SK-N-SH (cell line): ENCODE measurements at regions of chrX and their contacts with region 1.

Region 1: DNA sequence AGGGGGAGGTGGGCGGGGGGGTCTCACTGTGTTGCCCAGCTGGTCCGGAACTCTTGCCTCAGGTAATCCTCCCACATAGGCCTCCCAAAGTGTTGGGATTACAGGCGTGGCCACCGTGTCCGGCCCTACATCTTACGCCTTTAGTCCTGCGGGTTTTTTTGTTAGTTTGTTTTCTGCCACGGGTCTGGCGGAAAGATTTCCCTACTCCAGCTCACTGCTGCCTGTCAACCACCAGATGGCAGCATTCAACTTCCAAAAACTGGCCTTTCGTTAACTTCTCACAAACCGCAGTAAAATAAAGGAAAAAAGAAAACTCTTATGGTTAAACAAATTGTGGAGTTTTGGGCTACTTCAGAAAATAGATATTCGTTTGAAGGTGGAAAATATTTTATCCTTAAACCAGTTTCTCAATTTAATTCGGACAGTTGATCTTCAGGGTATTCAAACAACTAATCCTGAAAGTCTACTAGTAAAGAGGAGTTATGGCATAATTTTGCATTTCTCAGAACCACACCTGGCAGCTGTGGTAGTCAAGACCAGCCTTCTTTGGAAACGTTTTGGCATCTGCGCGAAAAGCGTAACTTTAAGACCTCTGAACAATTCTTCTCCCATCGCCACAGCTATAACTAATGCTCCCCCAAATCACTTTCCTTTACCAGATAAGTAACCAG is 41.1 kb downstream of the LUZP4 start:
- DNase-seq: peak; percentile 67
- H3K4me3 ChIP-seq: peak overlapping the region in 1 of 2 experiments; percentile 15; a peak in 1 of 4 replicates
- H3K27ac ChIP-seq: no peak overlapping the region
- H3K4me1 ChIP-seq: no peaks in the 10 kb centered on the region; a peak in 1 of 4 replicates
- H3K27me3 ChIP-seq: peaks cover 4% of the 10 kb centered on the region; the same call in 1 of the 2 replicates
- CTCF ChIP-seq: peak; percentile 91
- EP300 ChIP-seq: no peak
- RAD21 ChIP-seq: peak; percentile 92

Region 2: DNA sequence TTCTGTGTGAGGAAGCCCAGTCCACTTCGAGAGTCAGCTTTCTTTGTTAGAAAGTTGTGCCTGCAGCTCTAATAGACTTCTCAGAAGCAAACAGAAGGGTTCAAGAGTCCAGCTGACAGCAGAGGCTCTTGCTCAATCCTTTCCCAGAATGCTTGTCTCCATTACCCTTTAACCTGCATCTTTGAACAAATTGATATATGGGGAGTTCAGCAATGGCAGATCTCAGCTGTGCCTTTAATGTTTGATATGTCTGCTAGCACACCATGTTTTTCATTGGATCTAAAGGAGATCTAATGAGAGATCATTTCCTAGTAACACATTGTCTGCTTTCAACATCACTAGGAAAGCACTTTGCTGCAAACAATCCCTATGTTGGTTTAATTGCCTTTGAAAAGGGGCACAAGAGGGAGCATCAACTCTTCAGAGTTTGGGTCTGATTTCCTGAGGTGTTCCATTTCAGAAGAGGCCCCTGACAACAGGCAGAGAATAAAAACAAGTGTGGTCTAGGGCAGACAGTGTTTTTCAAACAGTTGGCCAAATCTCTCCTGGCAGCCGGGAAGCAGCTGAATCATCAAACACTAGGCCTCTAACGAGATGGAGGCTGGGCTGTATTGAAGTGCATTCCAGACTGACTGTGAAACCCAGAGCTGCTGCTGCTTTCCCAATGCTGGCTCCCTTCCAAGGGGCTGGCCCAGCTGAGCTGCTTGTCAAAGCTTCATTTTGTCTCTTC is 14.4 kb after region 1 on chrX:
- CTCF ChIA-PET with region 1: interaction called, 11 read pairs
- POLR2A ChIA-PET with region 1: no interaction called
- DNase-seq: peak; percentile 58
- H3K4me3 ChIP-seq: no peak overlapping the region
- H3K27ac ChIP-seq: peak overlapping the region; percentile 71 to 75
- H3K4me1 ChIP-seq: peaks cover 0 to 8% of the 10 kb centered on the region in 2 experiments; a peak in 3 of 4 replicates
- H3K27me3 ChIP-seq: no peaks in the 10 kb centered on the region
- CTCF ChIP-seq: no peak
- EP300 ChIP-seq: peak in 1 of 2 experiments; percentile 76; a peak in 3 of 4 replicates
- RAD21 ChIP-seq: peak; percentile 2; the same call in 1 of the 2 replicates

Region 3: GRCh38 chrX:115560978-115561604 is 230.5 kb after region 1 on chrX and contains the start of gene PLS3:
- CTCF ChIA-PET with region 1: interaction called, 14 read pairs
- POLR2A ChIA-PET with region 1: no interaction called
- DNase-seq: peak; percentile 85
- H3K4me3 ChIP-seq: peak within 1 kb of the TSS; percentile 62 to 70
- H3K27ac ChIP-seq: peak within 1 kb of the TSS; percentile 64 to 71
- H3K4me1 ChIP-seq: peaks cover 0 to 12% of the 10 kb centered on the region in 2 experiments; a peak in 3 of 4 replicates
- H3K27me3 ChIP-seq: peaks cover 4% of the 10 kb centered on the region; the same call in 1 of the 2 replicates
- CTCF ChIP-seq: no peak
- EP300 ChIP-seq: no peak
- RAD21 ChIP-seq: no peak
- polyA plus RNA-seq, gene PLS3: 35.7 and 47.4 TPM in 2 replicates